Colonic mucosa (tissue), 4 donors: ENCODE measurements at regions of chr11 and their contacts with region 1.

Region 1: DNA sequence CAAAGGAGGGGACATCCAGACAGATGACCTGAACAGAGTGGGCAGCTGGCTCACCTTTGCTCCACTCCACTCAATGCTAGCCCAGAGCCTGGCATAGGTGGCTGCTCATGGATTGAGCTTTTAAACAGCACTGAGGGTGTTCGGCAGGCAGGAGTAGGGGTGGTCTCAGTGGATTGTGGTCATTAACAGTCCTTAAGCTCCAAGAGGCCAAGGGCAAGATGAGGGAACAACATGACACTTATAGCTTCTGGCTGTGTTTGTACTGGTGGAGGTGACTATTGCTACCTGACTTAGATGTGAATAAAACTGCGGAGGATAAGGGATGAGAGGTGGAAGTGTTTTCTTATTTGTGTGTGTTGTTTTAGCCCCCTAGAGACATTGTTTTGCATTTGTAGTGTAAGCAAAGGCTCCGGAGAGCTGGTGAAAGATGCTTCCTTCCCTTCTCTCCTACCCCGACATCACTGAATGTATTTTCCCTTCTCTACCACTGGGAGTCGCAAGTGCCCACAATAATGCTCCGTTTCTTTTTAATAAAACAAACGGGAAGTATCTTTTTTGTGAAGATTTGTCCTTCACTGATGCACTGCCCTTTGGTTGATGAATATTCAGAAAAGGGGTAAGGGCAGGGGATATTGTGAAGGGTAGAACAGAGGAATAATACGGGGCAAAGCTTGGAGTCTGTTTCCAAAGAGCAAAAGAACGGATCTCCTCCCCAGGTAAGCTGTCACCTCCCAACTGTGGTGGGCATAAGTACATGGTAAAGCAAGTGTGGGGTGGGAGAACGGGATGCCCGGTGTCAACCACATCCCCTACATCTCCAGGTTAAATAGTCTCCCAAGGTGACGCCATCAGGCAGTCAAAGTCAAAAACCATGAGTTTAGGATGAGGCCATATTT is 27.5 kb upstream of the MTNR1B start:
- DNase-seq: peak; percentile 24
- H3K4me3 ChIP-seq: no peak overlapping the region
- H3K27ac ChIP-seq: no peak overlapping the region
- H3K4me1 ChIP-seq: no peaks in the 10 kb centered on the region
- H3K27me3 ChIP-seq: no peaks in the 10 kb centered on the region
- CTCF ChIP-seq: peak; percentile 55

Region 2: GRCh38 chr11:92663539-92663938 is 278.4 kb before region 1 on chr11:
- intact Hi-C with region 1: no loop called
- DNase-seq: no peak
- H3K4me3 ChIP-seq: no peak overlapping the region
- H3K27ac ChIP-seq: no peak overlapping the region
- H3K4me1 ChIP-seq: no peaks in the 10 kb centered on the region
- H3K27me3 ChIP-seq: no peaks in the 10 kb centered on the region
- CTCF ChIP-seq: no peak

Region 3: DNA sequence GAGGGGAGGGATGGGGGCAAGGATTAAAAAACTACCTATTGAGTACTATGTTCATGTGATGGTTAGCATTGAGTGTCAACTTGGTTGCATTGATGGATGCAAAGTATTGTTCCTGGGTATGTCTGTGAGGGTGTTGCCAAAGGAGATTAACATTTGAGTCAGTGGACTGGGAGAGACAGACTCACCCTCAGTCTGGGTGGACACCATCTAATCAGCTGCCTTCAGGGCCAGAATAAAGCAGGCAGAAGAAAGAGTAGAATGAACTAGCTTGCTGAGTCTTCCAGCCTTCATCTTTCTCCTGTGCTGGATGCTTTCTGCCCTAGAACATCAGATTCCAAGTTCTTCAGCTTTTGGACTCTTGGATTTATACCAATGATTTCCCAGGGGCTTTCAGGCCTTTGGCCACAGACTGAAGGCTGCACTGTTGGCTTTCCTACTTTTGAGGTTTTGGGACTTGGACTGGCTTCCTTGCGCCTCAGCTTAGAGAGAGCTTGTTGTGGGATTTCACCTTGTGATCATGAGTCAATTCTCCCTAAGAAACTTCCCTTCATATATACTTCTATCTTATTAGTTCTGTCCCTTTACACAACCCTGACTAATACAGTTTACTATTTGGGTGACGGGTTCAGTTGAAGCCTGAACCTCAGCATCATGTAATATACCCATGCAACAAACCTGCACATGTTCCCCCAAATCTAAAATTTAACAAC is 97.8 kb after region 1 on chr11:
- intact Hi-C with region 1: no loop called
- DNase-seq: no peak
- H3K4me3 ChIP-seq: no peak overlapping the region
- H3K27ac ChIP-seq: no peak overlapping the region
- H3K4me1 ChIP-seq: no peaks in the 10 kb centered on the region
- H3K27me3 ChIP-seq: no peaks in the 10 kb centered on the region
- CTCF ChIP-seq: no peak

Region 4: GRCh38 chr11:93225662-93226061 is 283.7 kb after region 1 on chr11:
- intact Hi-C with region 1: loop called (anchors 5 kb)
- DNase-seq: no peak
- H3K4me3 ChIP-seq: no peak overlapping the region
- H3K27ac ChIP-seq: no peak overlapping the region
- H3K4me1 ChIP-seq: no peaks in the 10 kb centered on the region
- H3K27me3 ChIP-seq: no peaks in the 10 kb centered on the region
- CTCF ChIP-seq: no peak